Cardiac septum (tissue), 1 donor: ENCODE measurements at regions of chr19 and their contacts with region 1.

Region 1: GRCh38 chr19:4873930-4874329 is 6.5 kb upstream of the PLIN3 start:
- DNase-seq: no peak

Region 2: DNA sequence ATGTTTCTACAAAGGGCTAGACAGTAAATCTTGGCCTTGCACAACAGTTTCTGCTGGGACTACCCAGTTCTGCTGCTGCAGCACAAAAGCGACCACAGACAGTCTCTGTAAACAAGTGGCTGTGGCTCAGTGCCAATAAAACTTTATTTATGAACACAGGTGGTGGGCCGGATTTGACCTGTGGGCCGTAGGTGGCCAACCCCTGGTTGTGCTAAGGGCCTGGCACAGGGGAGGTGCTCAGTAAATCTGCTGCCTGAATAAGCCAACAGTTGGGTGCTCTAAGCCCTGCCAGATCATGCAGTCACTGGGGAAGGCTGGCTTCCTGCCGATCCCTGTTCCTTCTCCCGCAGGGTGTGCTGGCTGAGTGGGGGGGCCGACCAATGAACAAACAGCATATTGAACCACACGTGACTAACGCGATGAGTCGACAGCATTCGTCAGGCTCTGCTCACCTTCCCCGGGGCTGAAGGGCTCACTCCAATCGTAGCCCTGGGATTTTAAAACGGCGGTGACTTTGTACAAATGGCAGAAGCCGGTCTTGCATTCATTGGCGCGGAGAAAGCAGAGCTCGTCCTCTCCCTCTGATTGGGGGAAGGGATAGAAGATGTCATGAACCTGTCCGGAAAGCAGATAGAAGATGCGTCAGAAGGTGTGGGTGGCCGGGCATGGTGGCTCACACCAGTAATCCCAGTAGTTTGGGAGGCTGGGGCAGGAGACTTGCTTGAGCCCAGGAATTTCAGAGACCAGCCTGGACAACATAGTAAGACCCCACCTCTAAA is 179.5 kb before region 1 on chr19:
- intact Hi-C with region 1: no loop called
- DNase-seq: no peak

Region 3: DNA sequence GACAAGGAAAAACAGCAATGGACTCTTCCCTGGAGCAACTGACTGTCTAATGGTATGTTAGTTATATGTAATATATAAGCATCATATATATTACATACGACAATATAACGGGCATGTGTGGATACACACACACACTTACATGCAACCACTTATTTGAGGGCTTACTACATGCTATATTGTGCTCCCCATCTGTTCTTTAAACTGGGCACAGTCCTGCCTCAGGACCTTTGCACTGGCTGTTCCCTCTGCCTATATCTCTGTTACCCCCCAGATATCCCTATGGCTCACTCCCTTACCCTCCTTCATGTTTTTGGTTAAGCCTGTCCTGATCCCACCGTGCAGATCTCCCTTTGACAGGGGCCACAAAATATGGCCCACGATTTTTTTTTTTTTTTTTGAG is 52.7 kb before region 1 on chr19:
- intact Hi-C with region 1: no loop called
- DNase-seq: no peak

Region 4: GRCh38 chr19:4909897-4910593 is 36.1 kb after region 1 on chr19:
- intact Hi-C with region 1: loop called (anchors 1 kb)
- DNase-seq: peak; percentile 95

Region 5: DNA sequence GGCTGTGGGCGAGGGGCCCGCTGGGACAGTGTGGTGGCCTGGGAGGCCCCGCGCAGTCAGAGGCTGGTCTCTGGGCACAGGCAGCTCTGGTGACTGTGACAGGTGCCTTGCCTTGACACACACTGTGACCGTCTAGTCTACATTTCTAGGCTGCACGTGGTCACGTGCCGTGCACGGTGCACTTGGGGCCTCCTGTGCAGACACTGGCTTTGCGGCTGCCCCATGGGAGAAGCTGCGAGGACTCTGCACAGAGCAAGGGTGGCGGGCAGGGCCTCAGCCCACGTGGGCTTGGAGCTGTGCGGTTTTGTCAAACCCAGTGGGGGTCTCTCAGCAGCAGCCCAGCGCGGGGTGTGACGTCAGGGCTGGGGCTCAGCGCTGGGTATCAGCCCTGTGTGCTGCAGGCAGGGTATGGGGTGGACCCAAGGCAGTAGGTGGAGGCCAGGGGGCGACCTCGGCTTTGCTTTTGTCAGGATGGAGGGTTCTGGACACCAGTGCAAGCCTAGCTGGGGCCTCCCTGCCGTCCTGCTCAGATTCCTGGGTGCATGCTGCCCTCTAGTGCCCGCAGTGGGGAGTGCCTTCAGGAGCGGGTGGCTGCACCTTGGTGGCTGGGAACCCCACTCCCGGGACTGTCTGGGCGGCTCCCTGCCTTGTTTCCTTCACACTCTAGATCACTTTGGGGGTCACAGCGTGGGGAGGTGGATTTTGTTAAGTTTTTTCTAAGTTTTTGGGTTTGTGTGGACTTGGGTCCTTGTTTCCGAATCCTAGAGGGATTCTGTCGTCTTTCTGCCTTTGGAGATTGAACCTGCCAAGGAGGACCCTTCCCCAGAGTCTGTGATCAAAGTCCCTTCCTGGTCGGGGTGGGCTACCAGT is 157.5 kb after region 1 on chr19:
- intact Hi-C with region 1: loop called (anchors 2 kb)
- DNase-seq: peak; percentile 90